ENCODE measurements at regions of chr5 and their contacts with region 1.

Region 1: GRCh38 chr5:102865510-102866236 is 110.6 kb downstream of the PAM start:
- DNase-seq: peak; percentile 88
- ATAC-seq: peak; percentile 83
- H3K4me3 ChIP-seq: peak overlapping the region; percentile 56
- H3K27ac ChIP-seq: peak overlapping the region; percentile 79
- H3K4me1 ChIP-seq: peaks cover 2% of the 10 kb centered on the region
- H3K27me3 ChIP-seq: no peaks in the 10 kb centered on the region
- CTCF ChIP-seq: no peak
- POLR2A ChIP-seq: peak; percentile 82
- RAD21 ChIP-seq: no peak

Region 2: GRCh38 chr5:102971697-102972293 is 106.1 kb after region 1 on chr5:
- CTCF ChIA-PET with region 1: no interaction called
- POLR2A ChIA-PET with region 1: no interaction called
- dilution Hi-C with region 1: no loop called
- in situ Hi-C with region 1: no loop called
- intact Hi-C with region 1: loop called (anchors 5 kb)
- DNase-seq: peak; percentile 70
- ATAC-seq: peak; percentile 86
- H3K4me3 ChIP-seq: no peak overlapping the region
- H3K27ac ChIP-seq: no peak overlapping the region
- H3K4me1 ChIP-seq: peaks cover 6% of the 10 kb centered on the region
- H3K27me3 ChIP-seq: no peaks in the 10 kb centered on the region
- CTCF ChIP-seq: peak; percentile 62
- POLR2A ChIP-seq: no peak
- RAD21 ChIP-seq: peak; percentile 60

Region 3: DNA sequence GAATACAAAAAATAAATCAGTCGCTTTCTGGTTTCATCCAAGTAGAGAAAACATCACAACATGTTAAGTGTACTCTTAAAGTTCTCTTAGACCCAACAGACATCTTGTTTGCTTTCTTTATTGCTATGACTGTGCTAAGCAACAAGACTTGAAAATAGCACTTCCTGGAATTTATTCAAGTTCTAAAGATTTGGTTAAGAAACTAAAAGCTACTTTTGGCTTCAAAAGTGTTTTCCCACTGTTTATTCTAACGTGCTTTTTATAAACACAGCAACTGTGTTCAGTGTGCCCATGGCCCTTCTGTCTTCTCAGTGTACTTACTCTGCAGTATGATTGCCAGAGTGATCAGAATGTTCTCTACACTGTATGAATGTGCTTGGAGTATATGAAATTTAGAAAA is 144.5 kb after region 1 on chr5:
- CTCF ChIA-PET with region 1: no interaction called
- POLR2A ChIA-PET with region 1: no interaction called
- dilution Hi-C with region 1: no loop called
- in situ Hi-C with region 1: no loop called
- intact Hi-C with region 1: loop called (anchors 5 kb)
- DNase-seq: peak; percentile 42
- ATAC-seq: peak; percentile 83
- H3K4me3 ChIP-seq: no peak overlapping the region
- H3K27ac ChIP-seq: no peak overlapping the region
- H3K4me1 ChIP-seq: peaks cover 2% of the 10 kb centered on the region; the same call in 1 of the 2 replicates
- H3K27me3 ChIP-seq: no peaks in the 10 kb centered on the region
- CTCF ChIP-seq: no peak
- POLR2A ChIP-seq: no peak
- RAD21 ChIP-seq: no peak